Activated CD4-positive, alpha-beta T cell treated with anti-CD3 and anti-CD28 coated beads, Interleukin-2, amount 10 ng/mL, durations not matched to agents 7 days and 5 days (primary cell): ENCODE measurements at regions of chr1 and their contacts with region 1.

Region 1: GRCh38 chr1:24415334-24415909 is at the start of gene NIPAL3:
- DNase-seq: peak; percentile 99
- H3K4me3 Mint-ChIP-seq: peak within 1 kb of the TSS; percentile 99
- H3K27ac Mint-ChIP-seq: peak within 1 kb of the TSS; percentile 90
- H3K4me1 Mint-ChIP-seq: peaks cover 60% of the 10 kb centered on the region
- H3K27me3 Mint-ChIP-seq: no peaks in the 10 kb centered on the region
- total RNA-seq, gene NIPAL3: 72.8 to 78.1 TPM

Region 2: GRCh38 chr1:24403806-24404205 is 11.6 kb before region 1 on chr1:
- CTCF ChIA-PET with region 1: interaction called, 15 read pairs
- POLR2A ChIA-PET with region 1: no interaction called
- DNase-seq: no peak
- H3K4me3 Mint-ChIP-seq: no peak overlapping the region
- H3K27ac Mint-ChIP-seq: no peak overlapping the region
- H3K4me1 Mint-ChIP-seq: no peaks in the 10 kb centered on the region
- H3K27me3 Mint-ChIP-seq: no peaks in the 10 kb centered on the region

Region 3: GRCh38 chr1:24426744-24427544 is 11.5 kb after region 1 on chr1:
- CTCF ChIA-PET with region 1: interaction called, 30 read pairs
- POLR2A ChIA-PET with region 1: no interaction called
- DNase-seq: no peak
- H3K4me3 Mint-ChIP-seq: no peak overlapping the region
- H3K27ac Mint-ChIP-seq: no peak overlapping the region
- H3K4me1 Mint-ChIP-seq: peaks cover 40% of the 10 kb centered on the region
- H3K27me3 Mint-ChIP-seq: no peaks in the 10 kb centered on the region

Region 4: GRCh38 chr1:24486331-24487065 is 71.1 kb after region 1 on chr1:
- CTCF ChIA-PET with region 1: interaction called, 12 read pairs
- POLR2A ChIA-PET with region 1: no interaction called
- DNase-seq: peak; percentile 80
- H3K4me3 Mint-ChIP-seq: peak overlapping the region; percentile 63
- H3K27ac Mint-ChIP-seq: peak overlapping the region; percentile 93
- H3K4me1 Mint-ChIP-seq: peaks cover 78% of the 10 kb centered on the region
- H3K27me3 Mint-ChIP-seq: no peaks in the 10 kb centered on the region

Region 5: DNA sequence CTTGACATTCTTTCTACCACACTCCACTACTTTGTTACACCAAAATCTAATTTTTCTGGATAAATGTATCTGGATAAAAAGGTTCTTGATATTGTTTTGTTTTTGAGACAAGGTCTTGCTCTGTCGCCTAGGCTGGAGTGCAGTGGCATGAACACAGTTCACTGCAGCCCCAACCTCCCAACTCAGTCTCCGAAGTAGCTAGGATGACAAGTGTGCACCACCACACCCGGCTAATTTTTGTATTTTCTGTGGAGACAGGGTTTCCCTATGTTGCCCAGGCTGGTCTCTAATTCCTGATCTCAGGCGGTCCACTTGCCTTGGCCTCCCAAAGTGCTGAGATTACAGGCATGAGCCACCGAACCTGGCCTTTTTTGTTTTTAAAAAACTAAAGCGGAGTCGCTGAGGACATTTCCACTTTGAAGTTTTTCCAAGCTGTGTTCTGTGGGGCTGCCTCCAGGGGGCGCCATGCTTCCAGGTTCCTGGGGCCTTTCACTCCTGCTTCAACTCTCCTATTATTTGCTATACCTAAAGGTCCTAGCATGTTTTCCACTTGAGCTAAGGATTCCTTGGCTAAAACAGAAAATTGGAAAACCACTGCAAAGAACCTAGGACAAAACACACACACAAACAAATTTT is 126.4 kb after region 1 on chr1:
- CTCF ChIA-PET with region 1: interaction called, 18 read pairs
- POLR2A ChIA-PET with region 1: no interaction called
- DNase-seq: peak; percentile 39
- H3K4me3 Mint-ChIP-seq: no peak overlapping the region
- H3K27ac Mint-ChIP-seq: peak overlapping the region; percentile 77
- H3K4me1 Mint-ChIP-seq: peaks cover 67% of the 10 kb centered on the region
- H3K27me3 Mint-ChIP-seq: no peaks in the 10 kb centered on the region

Region 6: DNA sequence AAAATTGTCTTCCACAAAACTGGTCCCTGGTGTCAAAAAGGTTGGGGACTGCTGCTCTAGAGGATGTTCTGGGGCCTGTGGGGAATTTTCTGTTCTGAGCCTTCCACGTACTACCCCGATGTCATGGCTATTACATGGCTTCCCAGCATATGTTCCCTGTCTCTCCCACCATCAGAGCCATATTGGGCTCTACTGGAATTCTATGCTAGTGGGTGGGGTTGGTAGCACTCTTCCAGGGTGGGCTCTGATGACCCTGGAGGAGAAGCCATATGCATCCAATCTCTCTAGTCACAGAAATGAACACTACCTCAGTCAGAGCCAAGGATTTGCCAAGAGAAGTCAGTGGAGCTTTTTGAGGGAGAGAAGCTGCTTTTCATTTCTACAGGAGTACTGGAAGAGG is 275.6 kb after region 1 on chr1:
- CTCF ChIA-PET with region 1: no interaction called
- POLR2A ChIA-PET with region 1: no interaction called
- DNase-seq: no peak
- H3K4me3 Mint-ChIP-seq: no peak overlapping the region
- H3K27ac Mint-ChIP-seq: no peak overlapping the region
- H3K4me1 Mint-ChIP-seq: peaks cover 6% of the 10 kb centered on the region
- H3K27me3 Mint-ChIP-seq: peaks cover 5% of the 10 kb centered on the region